ENCODE measurements at regions of chr1 and their contacts with region 1.

Region 1: DNA sequence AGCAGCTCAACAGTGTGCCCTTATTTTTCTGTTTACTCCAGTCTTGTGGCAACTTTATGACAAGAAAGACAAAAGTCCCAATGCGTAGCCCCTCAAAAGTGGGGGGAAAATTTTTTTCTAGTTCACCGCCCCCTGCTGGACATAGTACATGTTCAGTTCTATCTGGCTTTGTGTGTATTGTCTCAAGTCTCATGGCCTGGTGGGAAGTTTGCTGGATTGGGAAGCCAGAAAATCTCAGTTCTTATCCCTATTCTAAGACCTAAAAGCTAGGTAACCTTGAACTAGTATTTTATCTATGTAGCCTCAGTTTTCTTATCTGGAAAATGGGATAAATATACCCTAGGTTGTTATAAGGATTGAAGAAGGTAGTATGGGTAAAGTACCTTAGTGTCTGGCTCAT is 55.8 kb upstream of the LDLRAP1 start:
- DNase-seq: peak; percentile 28
- H3K4me3 Mint-ChIP-seq: no peak overlapping the region
- H3K27ac Mint-ChIP-seq: no peak overlapping the region
- H3K4me1 Mint-ChIP-seq: no peaks in the 10 kb centered on the region
- H3K27me3 Mint-ChIP-seq: no peaks in the 10 kb centered on the region

Region 2: GRCh38 chr1:25356848-25357247 is 130.8 kb before region 1 on chr1:
- CTCF ChIA-PET with region 1: no interaction called
- POLR2A ChIA-PET with region 1: no interaction called
- DNase-seq: no peak
- H3K4me3 Mint-ChIP-seq: peak overlapping the region; percentile 18
- H3K27ac Mint-ChIP-seq: peak overlapping the region; percentile 86
- H3K4me1 Mint-ChIP-seq: peaks cover 57% of the 10 kb centered on the region
- H3K27me3 Mint-ChIP-seq: no peaks in the 10 kb centered on the region

Region 3: DNA sequence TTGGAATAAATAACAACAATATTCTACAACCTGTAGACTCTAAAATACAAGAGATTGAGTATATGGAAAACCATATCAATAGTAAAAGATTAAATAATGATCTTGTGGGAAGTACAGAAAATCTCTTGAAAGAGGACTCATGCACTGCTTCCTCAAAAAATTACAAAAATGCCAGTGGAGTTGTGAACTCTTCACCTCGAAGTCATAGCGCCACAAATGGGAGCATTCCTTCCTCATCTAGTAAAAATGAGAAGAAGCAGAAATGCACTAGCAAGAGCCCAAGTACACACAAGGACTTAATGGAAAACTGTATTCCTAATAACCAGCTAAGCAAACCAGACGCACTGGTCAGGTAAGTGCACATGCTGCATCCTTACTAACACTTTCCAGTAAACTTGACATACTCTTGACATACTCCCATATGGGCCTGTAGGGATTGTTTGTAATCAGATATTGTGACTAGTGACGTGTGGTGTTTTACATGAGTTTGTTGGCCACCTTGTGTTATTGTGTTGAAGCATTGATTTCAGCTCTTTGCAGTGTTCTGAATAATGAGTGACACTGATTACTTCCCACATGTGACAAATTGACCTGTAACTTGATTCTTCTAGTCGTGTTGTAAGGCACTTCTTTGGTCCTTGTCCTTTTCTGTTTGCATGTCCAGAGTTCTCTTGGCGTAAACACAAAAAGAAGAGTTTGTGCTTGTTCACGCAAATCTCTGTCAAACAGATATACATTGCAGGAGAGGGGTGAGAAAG is 28.9 kb before region 1 on chr1:
- CTCF ChIA-PET with region 1: interaction called, 10 read pairs
- POLR2A ChIA-PET with region 1: interaction called, 3 read pairs
- DNase-seq: no peak
- H3K4me3 Mint-ChIP-seq: no peak overlapping the region
- H3K27ac Mint-ChIP-seq: no peak overlapping the region
- H3K4me1 Mint-ChIP-seq: no peaks in the 10 kb centered on the region
- H3K27me3 Mint-ChIP-seq: no peaks in the 10 kb centered on the region

Region 4: GRCh38 chr1:25469177-25469576 is 18.5 kb before region 1 on chr1:
- CTCF ChIA-PET with region 1: interaction called, 14 read pairs
- POLR2A ChIA-PET with region 1: interaction called, 3 read pairs
- DNase-seq: no peak
- H3K4me3 Mint-ChIP-seq: no peak overlapping the region
- H3K27ac Mint-ChIP-seq: no peak overlapping the region
- H3K4me1 Mint-ChIP-seq: peaks cover 36% of the 10 kb centered on the region
- H3K27me3 Mint-ChIP-seq: no peaks in the 10 kb centered on the region

Region 5: DNA sequence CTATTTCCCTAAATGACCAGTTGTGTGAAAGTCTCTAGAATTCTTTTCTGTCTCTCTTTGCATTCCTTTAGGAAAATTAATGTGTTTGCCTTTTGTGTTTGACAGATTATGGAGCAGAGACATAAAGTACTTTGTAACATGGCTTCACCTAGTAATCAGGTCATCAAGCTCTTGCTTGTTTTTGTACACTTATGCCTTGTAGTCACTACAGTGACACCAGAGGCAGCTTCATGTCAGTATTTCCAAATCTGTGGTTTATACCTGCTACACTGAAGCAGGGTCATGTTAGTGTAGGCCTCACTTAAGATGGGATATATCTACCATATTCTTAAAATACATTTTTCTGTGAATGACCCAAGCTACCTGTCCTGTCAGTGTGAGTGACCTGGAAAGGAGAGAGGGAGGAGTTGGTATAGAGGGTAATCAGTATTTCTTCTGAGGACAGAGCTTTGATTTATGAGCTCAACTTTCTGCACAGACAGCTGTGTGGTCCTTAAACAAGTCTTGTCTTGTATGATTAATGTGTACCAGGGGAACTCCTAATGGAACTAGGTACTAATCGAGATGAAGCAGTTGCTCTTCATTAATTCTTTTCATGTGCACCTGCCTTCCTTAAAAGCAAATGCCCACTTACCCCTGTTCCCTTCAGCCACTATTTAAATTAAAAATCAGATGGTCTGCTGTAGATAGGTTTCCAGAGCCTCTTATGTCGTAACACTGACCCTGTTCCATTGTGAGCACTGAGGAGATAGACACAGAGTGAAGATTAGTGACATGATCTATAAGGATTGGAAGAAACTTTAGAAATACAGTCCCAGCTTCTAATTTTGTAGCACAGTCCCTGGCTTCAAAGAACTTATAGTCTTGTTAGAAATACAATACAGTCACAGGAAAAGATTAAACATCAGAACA is 11.2 kb before region 1 on chr1:
- CTCF ChIA-PET with region 1: interaction called, 23 read pairs
- POLR2A ChIA-PET with region 1: no interaction called
- DNase-seq: no peak
- H3K4me3 Mint-ChIP-seq: no peak overlapping the region
- H3K27ac Mint-ChIP-seq: no peak overlapping the region
- H3K4me1 Mint-ChIP-seq: peaks cover 24% of the 10 kb centered on the region
- H3K27me3 Mint-ChIP-seq: no peaks in the 10 kb centered on the region

Region 6: DNA sequence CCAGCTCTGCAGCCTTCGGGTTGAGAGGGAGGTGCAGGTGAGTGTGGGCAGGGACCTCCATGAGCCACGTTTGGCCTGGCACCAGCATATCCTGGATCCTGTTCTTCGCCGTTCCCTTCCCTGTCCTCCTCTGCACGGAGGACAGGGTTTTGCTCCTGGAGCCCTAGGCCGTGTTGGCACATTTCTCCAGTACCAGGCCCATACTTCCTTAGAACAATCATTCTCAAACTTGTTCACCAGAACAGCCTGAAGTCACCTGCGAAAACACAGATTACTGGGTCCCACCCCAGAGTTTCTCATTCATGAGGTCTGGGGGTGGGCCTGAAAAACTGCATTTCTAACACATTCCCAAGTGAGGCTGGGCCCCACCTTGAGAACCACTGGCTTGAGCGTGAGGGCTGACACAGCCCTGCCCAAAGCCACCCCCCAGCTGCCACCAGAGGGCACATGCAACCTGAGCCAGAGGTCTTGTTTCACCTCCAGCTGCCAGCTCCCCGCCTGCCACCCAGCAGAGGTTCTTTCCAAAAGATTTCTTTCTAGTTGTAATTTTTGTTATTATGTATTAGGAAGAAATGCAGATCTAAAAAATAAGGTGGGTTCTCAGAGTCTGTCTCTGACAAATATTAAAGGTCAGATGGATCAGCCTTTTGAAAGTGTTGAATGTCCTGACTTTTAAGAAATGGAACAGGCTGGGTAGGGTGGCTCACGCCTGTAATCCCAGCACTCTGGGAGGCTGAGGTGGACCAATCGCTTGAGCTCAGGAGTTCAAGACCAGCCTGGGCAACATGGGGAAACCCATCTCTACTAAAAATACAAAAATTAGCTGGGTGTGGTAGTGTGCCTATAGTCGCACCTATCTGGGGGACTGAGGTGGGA is 16.2 kb after region 1 on chr1:
- CTCF ChIA-PET with region 1: interaction called, 12 read pairs
- POLR2A ChIA-PET with region 1: interaction called, 3 read pairs
- DNase-seq: peak; percentile 66
- H3K4me3 Mint-ChIP-seq: no peak overlapping the region
- H3K27ac Mint-ChIP-seq: no peak overlapping the region
- H3K4me1 Mint-ChIP-seq: peaks cover 12% of the 10 kb centered on the region
- H3K27me3 Mint-ChIP-seq: peaks cover 5% of the 10 kb centered on the region